ENCODE measurements at regions of chr4 and their contacts with region 1.

Region 1: DNA sequence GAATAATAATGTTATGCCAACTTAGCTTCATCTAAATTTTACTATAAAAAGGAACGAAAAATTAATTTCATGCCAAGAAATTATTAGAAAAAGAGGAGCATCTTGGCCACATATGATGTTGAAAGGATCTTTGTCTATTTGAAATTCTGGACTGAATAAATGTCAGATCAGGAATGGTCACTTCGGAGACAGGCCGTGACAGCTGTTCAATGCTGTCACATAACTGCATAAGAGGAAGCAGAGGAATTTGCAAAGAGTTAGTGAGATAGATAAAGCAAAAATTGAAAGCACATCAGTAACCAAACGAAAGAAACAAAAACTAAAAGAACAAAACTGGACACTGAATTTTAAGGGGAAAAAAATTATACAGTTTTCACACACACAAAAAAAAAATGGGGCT is 100.9 kb downstream of the GASK1B start:
- DNase-seq: no peak
- ATAC-seq: no peak
- H3K4me3 ChIP-seq: no peak overlapping the region
- H3K4me3 Mint-ChIP-seq: no peak overlapping the region
- H3K27ac ChIP-seq: no peak overlapping the region
- H3K27ac Mint-ChIP-seq: no peak overlapping the region
- H3K4me1 ChIP-seq: no peaks in the 10 kb centered on the region
- H3K4me1 Mint-ChIP-seq: no peaks in the 10 kb centered on the region
- H3K27me3 ChIP-seq: no peaks in the 10 kb centered on the region
- H3K27me3 Mint-ChIP-seq: no peaks in the 10 kb centered on the region

Region 2: DNA sequence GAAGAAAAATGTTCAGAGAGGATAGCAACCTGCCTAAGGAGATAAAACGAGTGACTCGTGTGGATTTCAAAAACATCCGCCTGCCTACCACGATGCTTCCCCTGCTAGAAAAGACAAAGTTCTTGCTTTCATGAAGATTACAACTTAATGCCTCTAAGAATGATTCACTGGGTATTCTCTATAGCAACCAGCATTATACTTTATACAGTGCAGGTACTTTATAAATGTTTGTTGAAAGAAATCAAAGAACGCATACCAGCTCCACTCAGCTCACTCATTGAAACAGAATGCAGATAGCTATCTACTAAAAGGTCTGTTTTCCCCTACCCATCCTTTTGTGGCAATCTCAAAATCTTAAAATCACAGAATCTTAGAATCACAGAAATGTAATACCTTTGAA is 67.2 kb after region 1 on chr4:
- CTCF ChIA-PET with region 1: no interaction called
- POLR2A ChIA-PET with region 1: no interaction called
- DNase-seq: no peak
- ATAC-seq: no peak
- H3K4me3 ChIP-seq: no peak overlapping the region
- H3K4me3 Mint-ChIP-seq: no peak overlapping the region
- H3K27ac ChIP-seq: no peak overlapping the region
- H3K27ac Mint-ChIP-seq: no peak overlapping the region
- H3K4me1 ChIP-seq: no peaks in the 10 kb centered on the region
- H3K4me1 Mint-ChIP-seq: no peaks in the 10 kb centered on the region
- H3K27me3 ChIP-seq: no peaks in the 10 kb centered on the region
- H3K27me3 Mint-ChIP-seq: no peaks in the 10 kb centered on the region

Region 3: GRCh38 chr4:159382856-159383568 is 1311.1 kb after region 1 on chr4:
- CTCF ChIA-PET with region 1: interaction called in 1 of 2 experiments, 13 read pairs
- POLR2A ChIA-PET with region 1: no interaction called
- DNase-seq: no peak
- ATAC-seq: no peak
- H3K4me3 ChIP-seq: no peak overlapping the region
- H3K4me3 Mint-ChIP-seq: no peak overlapping the region
- H3K27ac ChIP-seq: no peak overlapping the region
- H3K27ac Mint-ChIP-seq: no peak overlapping the region
- H3K4me1 ChIP-seq: no peaks in the 10 kb centered on the region
- H3K4me1 Mint-ChIP-seq: no peaks in the 10 kb centered on the region
- H3K27me3 ChIP-seq: peaks cover 0 to 7% of the 10 kb centered on the region in 2 experiments
- H3K27me3 Mint-ChIP-seq: peaks cover 21 to 29% of the 10 kb centered on the region in 2 donors

Measured in T-cell (primary cell).